Activated B cell treated with CpG ODN at 0.5 μM for 24 hours (primary cell): ENCODE measurements at regions of chr17 and their contacts with region 1.

Region 1: DNA sequence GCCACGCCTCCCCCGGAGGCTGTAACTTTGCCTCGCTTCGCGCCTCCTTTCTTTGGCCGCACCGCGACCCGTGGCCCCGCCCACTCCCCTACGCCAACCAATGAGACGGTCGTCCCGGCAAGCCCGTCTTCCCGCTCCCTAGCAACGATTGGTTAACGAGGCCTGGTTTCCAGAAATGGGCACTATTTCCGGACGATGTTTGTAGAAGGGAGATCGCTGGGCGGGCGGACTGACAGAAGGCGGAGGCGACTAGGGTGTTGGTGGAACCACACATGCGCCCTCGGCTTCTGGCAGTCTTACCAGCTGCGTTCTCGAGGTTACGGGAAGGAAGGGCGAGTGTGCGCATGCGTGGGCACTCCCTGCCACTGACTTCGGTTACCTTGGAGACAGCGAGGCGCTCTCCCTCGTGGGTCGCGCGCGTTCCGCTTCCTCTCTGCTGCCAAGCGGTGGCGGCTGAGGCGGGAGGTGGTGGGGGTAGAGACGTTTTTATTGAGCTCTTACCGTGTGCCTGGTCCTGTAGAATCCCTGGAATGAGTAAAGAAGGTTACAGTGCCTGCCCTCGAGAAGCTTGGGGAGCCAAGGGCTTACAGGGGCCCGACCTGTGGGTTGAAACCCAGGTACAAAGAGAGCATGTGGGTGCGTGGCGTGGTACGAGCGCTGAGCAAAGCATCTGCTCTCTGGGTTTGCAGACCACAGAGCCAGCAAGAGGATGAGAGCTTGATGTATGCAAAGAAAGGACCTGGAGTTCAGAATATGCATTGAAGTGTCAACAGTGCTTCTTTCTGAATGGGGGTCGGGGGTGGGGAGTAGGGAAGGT is 500 bp upstream of the MAP3K14 start:
- DNase-seq: peak; percentile 99
- ATAC-seq: peak; percentile 79
- H3K4me3 Mint-ChIP-seq: peak overlapping the region; percentile 90
- H3K27ac Mint-ChIP-seq: peak overlapping the region; percentile 96
- H3K4me1 Mint-ChIP-seq: peaks cover 49% of the 10 kb centered on the region
- H3K27me3 Mint-ChIP-seq: no peaks in the 10 kb centered on the region
- CTCF ChIP-seq: no peak

Region 2: DNA sequence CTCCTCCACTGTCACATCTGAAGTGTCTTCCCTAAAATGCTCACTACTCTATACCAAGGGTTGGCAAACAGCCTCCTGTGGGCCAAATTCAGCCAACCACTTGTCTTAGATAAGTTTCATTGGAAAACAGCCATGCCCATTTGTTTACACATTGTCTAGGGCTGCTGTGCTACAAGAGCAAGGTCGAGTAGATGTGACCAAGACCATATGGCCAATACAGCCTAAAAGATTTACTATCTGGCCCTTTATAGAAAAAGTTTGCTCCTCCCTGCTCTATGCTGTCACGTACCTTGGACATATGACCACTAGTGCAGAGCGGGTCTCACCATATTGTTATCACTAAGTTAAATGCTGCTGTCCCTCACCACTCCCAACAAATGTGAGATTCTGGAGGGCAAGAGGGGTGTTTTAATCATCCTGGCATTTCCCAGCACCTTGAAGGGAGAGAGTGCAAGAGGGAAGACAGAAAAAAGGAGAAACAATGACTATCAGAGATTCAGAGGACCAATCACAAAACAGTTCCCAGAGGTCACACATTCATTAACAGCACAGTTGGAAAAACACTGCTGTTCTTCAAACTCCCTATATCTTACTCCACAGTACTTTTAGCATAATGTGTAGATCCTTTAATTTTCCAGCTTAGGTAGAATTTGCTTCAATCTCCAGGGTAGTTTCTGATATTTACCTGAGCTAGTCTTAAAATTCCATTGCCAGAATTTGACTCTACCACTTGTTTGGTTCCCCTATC is 1264.0 kb before region 1 on chr17:
- CTCF ChIA-PET with region 1: no interaction called
- POLR2A ChIA-PET with region 1: no interaction called
- intact Hi-C with region 1: no loop called
- DNase-seq: no peak
- ATAC-seq: no peak
- H3K4me3 Mint-ChIP-seq: no peak overlapping the region
- H3K27ac Mint-ChIP-seq: no peak overlapping the region
- H3K4me1 Mint-ChIP-seq: peaks cover 3% of the 10 kb centered on the region
- H3K27me3 Mint-ChIP-seq: no peaks in the 10 kb centered on the region
- CTCF ChIP-seq: no peak

Region 3: GRCh38 chr17:44344939-44345453 is 972.3 kb before region 1 on chr17 and contains the start of gene GRN:
- CTCF ChIA-PET with region 1: no interaction called
- POLR2A ChIA-PET with region 1: no interaction called
- intact Hi-C with region 1: loop called (anchors 10 kb)
- DNase-seq: peak; percentile 76
- ATAC-seq: peak; percentile 70
- H3K4me3 Mint-ChIP-seq: peak within 1 kb of the TSS; percentile 97
- H3K27ac Mint-ChIP-seq: peak within 1 kb of the TSS; percentile 89
- H3K4me1 Mint-ChIP-seq: peaks cover 58% of the 10 kb centered on the region
- H3K27me3 Mint-ChIP-seq: no peaks in the 10 kb centered on the region
- CTCF ChIP-seq: no peak
- total RNA-seq, gene GRN: 229 and 250 TPM in 2 replicates

Region 4: DNA sequence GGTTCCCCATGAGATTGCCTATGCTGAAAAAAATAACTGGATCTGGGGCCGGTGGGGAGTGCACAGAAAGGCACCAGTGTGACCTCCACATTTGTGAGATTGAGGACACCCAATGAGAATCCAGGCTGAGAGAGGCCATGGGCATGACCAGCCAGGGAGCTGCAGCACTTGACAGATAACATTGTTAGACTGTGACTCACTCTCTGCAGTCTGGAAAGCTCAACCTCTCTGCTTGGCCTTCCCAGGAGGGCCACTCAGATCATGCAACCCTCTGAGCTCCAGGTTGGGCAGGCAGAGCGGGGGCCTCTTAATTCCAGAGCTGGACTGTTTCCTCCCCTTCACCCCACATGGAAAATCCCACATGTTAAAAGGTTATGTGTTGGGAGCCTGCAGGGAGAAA is 730.0 kb before region 1 on chr17:
- CTCF ChIA-PET with region 1: no interaction called
- POLR2A ChIA-PET with region 1: no interaction called
- intact Hi-C with region 1: no loop called
- DNase-seq: no peak
- ATAC-seq: no peak
- H3K4me3 Mint-ChIP-seq: no peak overlapping the region
- H3K27ac Mint-ChIP-seq: no peak overlapping the region
- H3K4me1 Mint-ChIP-seq: no peaks in the 10 kb centered on the region
- H3K27me3 Mint-ChIP-seq: no peaks in the 10 kb centered on the region
- CTCF ChIP-seq: no peak

Region 5: DNA sequence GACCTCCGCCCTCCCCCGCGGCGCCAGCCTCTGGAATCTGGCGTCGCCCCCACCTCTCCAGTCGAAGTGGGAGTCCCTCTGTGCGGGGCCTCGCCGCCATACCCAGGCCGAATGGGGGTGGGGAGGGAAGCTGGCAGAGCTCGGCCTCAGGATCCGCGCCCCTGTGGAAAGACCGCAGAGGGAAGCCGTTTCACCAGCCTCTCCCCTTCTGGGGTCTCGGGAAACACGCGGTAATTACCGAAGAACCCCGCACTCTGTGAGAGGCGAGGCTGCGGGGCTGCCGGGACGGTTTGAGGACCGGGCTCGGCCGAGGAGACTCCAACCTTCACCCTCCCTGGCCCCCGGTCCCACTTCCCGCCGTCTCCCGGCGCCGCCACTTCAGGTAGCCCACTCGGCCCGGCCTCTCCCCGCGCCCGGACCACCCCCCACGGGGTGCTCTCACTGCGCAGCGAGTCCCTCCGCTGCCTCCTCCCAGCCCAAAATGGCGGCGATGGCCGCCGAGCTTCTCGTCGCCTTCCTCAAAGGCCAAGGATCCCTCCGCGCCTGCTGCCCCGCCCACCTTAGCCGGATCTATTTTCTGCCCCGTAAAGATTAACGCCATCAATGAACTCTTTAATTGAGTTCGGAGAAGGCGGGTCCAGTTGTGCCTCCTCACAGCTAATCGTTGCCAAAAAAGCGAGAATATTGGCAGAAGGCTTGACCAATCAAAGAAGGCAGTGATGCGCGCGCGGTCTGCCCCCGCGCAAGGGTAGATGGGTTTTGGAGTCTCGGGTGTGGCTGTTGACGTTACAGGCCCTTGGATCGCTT is 156.1 kb before region 1 on chr17:
- CTCF ChIA-PET with region 1: no interaction called
- POLR2A ChIA-PET with region 1: interaction called, 8 read pairs
- intact Hi-C with region 1: loop called (anchors 5 kb)
- DNase-seq: peak; percentile 98
- ATAC-seq: peak; percentile 93
- H3K4me3 Mint-ChIP-seq: peak overlapping the region; percentile 99
- H3K27ac Mint-ChIP-seq: peak overlapping the region; percentile 99
- H3K4me1 Mint-ChIP-seq: peaks cover 42% of the 10 kb centered on the region
- H3K27me3 Mint-ChIP-seq: no peaks in the 10 kb centered on the region
- CTCF ChIP-seq: no peak

Region 6: DNA sequence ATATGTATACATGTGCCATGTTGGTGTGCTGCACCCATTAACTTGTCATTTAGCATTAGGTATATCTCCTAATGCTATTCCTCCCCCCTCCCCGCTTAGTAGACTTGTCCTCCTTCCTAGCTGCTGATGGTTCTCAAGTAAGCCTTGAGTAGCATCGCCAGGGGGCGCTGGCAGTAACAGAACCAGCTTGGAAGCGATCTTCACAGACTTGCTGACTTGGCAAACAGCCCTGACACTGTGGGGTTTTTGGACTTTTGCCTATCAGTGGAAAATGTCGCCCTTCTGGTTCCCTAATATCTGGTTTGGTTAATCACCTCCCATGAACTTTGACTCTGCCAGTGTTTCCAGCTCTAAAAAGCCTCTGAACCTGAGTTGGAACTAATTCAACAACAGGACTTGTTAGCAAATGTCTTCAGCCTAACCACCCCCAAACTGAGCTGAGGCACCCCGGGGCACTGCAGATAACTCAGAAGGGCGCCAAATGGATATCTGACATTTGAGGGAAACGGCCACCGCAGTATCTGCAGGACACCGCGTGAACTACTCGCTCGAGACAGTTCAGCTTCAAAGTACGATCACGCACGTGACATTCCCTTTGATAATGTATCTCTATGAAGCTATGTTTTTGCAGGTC is 40.0 kb before region 1 on chr17:
- CTCF ChIA-PET with region 1: interaction called, 66 read pairs
- POLR2A ChIA-PET with region 1: interaction called, 291 read pairs
- intact Hi-C with region 1: loop called (anchors 1 kb)
- DNase-seq: peak; percentile 76
- ATAC-seq: peak; percentile 98
- H3K4me3 Mint-ChIP-seq: no peak overlapping the region
- H3K27ac Mint-ChIP-seq: peak overlapping the region; percentile 21
- H3K4me1 Mint-ChIP-seq: peaks cover 5% of the 10 kb centered on the region
- H3K27me3 Mint-ChIP-seq: no peaks in the 10 kb centered on the region
- CTCF ChIP-seq: no peak

Region 7: DNA sequence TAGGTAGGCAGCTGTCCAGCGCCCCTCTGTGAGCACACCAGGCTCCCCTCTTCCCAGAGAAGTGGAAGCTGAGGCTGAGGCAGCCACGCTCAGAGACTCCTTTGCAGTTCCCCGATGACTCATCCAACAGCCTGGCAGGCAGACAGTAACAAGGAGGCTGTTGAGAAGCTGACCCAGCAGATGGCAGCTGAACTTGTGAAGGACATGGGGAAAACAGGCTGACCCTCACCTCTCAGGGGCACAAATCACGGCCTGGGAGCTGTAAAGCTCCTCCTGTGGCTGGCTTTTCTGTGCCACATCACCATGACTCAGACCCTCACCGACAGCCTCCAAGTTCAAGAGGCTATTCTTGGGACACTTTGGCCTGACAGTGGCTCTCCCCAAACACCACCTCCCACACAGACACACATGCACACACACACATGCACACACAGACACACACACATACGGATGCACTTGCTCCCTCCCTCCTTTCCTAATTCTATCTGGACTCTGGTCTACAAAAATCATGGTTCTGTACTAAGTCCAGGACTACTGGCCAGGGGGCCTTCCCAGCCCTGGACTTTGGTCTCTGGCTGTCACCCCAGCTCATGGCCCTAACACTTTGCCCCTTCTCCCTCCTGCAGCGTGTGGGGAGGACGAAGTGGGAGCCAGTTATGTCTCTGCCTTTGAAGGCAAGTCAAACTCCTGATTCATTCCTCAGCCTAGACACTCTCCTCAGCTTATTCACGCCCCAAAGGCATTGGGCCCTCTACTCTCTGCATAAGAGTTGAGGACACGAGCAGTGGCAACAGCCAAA is 23.7 kb before region 1 on chr17:
- CTCF ChIA-PET with region 1: interaction called, 38 read pairs
- POLR2A ChIA-PET with region 1: interaction called, 436 read pairs
- intact Hi-C with region 1: loop called (anchors 1 kb)
- DNase-seq: no peak
- ATAC-seq: peak; percentile 35
- H3K4me3 Mint-ChIP-seq: peak overlapping the region; percentile 28
- H3K27ac Mint-ChIP-seq: peak overlapping the region; percentile 73
- H3K4me1 Mint-ChIP-seq: peaks cover 87% of the 10 kb centered on the region
- H3K27me3 Mint-ChIP-seq: no peaks in the 10 kb centered on the region
- CTCF ChIP-seq: no peak

Region 8: DNA sequence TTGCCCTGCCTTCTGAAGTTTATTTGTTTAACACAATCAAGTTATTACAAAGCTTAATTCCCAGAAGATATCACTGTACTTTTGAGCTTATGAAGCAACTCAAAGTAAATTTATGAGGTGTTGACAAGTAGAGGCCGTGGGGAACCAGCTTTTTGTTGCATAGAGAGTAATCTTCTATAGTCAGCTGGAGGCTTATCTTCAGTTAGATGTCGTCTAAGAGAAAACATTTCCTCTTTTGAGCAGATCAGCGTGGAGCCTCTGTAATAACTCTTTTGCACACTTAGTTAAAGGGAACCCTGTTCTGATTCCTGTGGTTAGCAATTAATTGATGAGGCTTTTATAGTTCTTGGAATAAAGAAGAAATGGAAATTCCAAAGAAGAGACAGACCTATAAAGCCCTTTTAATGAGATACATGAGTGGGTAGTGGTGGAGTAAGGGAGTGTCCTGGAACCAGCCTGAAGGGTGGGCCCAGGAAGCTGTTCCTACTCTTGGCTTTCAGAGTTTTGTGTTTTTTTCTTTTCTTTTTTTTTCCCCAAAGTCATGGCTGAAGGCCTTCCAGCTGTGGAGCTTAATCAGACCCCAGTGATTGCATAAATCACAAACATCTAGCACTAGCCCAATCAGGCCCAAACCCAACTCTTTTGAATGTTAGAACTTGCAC is 28.4 kb after region 1 on chr17:
- CTCF ChIA-PET with region 1: no interaction called
- POLR2A ChIA-PET with region 1: interaction called, 20 read pairs
- intact Hi-C with region 1: loop called (anchors 5 kb)
- DNase-seq: no peak
- ATAC-seq: no peak
- H3K4me3 Mint-ChIP-seq: no peak overlapping the region
- H3K27ac Mint-ChIP-seq: no peak overlapping the region
- H3K4me1 Mint-ChIP-seq: peaks cover 9% of the 10 kb centered on the region
- H3K27me3 Mint-ChIP-seq: peaks cover 4% of the 10 kb centered on the region
- CTCF ChIP-seq: no peak

Region 9: GRCh38 chr17:45385331-45385997 is 68.1 kb after region 1 on chr17:
- CTCF ChIA-PET with region 1: interaction called, 32 read pairs
- POLR2A ChIA-PET with region 1: interaction called, 34 read pairs
- intact Hi-C with region 1: loop called (anchors 1 kb)
- DNase-seq: peak; percentile 84
- ATAC-seq: peak; percentile 94
- H3K4me3 Mint-ChIP-seq: no peak overlapping the region
- H3K27ac Mint-ChIP-seq: no peak overlapping the region
- H3K4me1 Mint-ChIP-seq: peaks cover 7% of the 10 kb centered on the region
- H3K27me3 Mint-ChIP-seq: peaks cover 8% of the 10 kb centered on the region
- CTCF ChIP-seq: peak; percentile 35

Region 10: GRCh38 chr17:45688353-45688752 is 371.0 kb after region 1 on chr17:
- CTCF ChIA-PET with region 1: no interaction called
- POLR2A ChIA-PET with region 1: no interaction called
- intact Hi-C with region 1: no loop called
- DNase-seq: no peak
- ATAC-seq: no peak
- H3K4me3 Mint-ChIP-seq: no peak overlapping the region
- H3K27ac Mint-ChIP-seq: no peak overlapping the region
- H3K4me1 Mint-ChIP-seq: no peaks in the 10 kb centered on the region
- H3K27me3 Mint-ChIP-seq: peaks cover 28% of the 10 kb centered on the region
- CTCF ChIP-seq: no peak